T-cell (primary cell): ENCODE measurements at regions of chr10 and their contacts with region 1.

Region 1: GRCh38 chr10:100508691-100509150 is 10.9 kb downstream of the SEC31B start:
- DNase-seq: peak in 25 of 35 experiments; percentile 5 to 84 (median 33)
- ATAC-seq: peak; percentile 53 to 68 (median 61)
- H3K4me3 ChIP-seq: no peak overlapping the region
- H3K4me3 Mint-ChIP-seq: peak overlapping the region; percentile 25 to 70 (median 37)
- H3K27ac ChIP-seq: peak overlapping the region; percentile 66
- H3K27ac Mint-ChIP-seq: peak overlapping the region; percentile 89 to 90
- H3K4me1 ChIP-seq: peaks cover 36 to 50% of the 10 kb centered on the region in 2 experiments
- H3K4me1 Mint-ChIP-seq: peaks cover 66 to 73% (median 71%) of the 10 kb centered on the region in 3 donors
- H3K27me3 ChIP-seq: no peaks in the 10 kb centered on the region
- H3K27me3 Mint-ChIP-seq: no peaks in the 10 kb centered on the region

Region 2: GRCh38 chr10:100338434-100339036 is 170.2 kb before region 1 on chr10:
- CTCF ChIA-PET with region 1: interaction called, 4 to 13 read pairs
- POLR2A ChIA-PET with region 1: interaction called in 1 of 2 experiments, 8 read pairs
- DNase-seq: peak; percentile 53 to 87 (median 73)
- ATAC-seq: peak; percentile 81 to 90 (median 86)
- H3K4me3 ChIP-seq: no peak overlapping the region
- H3K4me3 Mint-ChIP-seq: no peak overlapping the region
- H3K27ac ChIP-seq: no peak overlapping the region
- H3K27ac Mint-ChIP-seq: no peak overlapping the region
- H3K4me1 ChIP-seq: no peaks in the 10 kb centered on the region
- H3K4me1 Mint-ChIP-seq: peaks cover 0 to 4% (median 4%) of the 10 kb centered on the region in 3 donors
- H3K27me3 ChIP-seq: peaks cover 0 to 4% of the 10 kb centered on the region in 2 experiments
- H3K27me3 Mint-ChIP-seq: peaks cover 3 to 7% of the 10 kb centered on the region in 2 donors

Region 3: DNA sequence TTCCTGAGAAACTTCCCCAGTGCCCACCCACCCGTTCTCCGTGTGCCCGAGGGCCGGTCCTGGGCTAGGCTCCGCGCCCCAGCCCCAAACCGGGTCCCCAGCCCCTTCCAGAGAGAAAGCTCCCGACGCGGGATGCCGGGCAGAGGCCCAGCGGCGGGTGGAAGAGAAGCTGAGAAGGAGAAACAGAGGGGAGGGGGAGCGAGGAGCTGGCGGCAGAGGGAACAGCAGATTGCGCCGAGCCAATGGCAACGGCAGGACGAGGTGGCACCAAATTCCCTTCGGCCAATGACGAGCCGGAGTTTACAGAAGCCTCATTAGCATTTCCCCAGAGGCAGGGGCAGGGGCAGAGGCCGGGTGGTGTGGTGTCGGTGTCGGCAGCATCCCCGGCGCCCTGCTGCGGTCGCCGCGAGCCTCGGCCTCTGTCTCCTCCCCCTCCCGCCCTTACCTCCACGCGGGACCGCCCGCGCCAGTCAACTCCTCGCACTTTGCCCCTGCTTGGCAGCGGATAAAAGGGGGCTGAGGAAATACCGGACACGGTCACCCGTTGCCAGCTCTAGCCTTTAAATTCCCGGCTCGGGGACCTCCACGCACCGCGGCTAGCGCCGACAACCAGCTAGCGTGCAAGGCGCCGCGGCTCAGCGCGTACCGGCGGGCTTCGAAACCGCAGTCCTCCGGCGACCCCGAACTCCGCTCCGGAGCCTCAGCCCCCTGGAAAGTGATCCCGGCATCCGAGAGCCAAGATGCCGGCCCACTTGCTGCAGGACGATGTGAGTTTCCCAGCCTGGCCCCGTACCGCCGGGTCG is 161.8 kb before region 1 on chr10 and contains the start of gene SCD:
- CTCF ChIA-PET with region 1: interaction called, 4 to 21 read pairs
- POLR2A ChIA-PET with region 1: interaction called in 1 of 2 experiments, 8 read pairs
- DNase-seq: peak; percentile 43 to 86 (median 62)
- ATAC-seq: peak; percentile 84 to 92 (median 86)
- H3K4me3 ChIP-seq: peak within 1 kb of the TSS; percentile 69 to 77
- H3K4me3 Mint-ChIP-seq: peak within 1 kb of the TSS; percentile 80 to 88 (median 81)
- H3K27ac ChIP-seq: peak within 1 kb of the TSS; percentile 35
- H3K27ac Mint-ChIP-seq: peak within 1 kb of the TSS; percentile 23 to 29
- H3K4me1 ChIP-seq: peaks cover 2 to 31% of the 10 kb centered on the region in 2 experiments
- H3K4me1 Mint-ChIP-seq: peaks cover 17 to 32% (median 21%) of the 10 kb centered on the region in 3 donors
- H3K27me3 ChIP-seq: peaks cover 0 to 9% of the 10 kb centered on the region in 2 experiments
- H3K27me3 Mint-ChIP-seq: peaks cover 0 to 5% of the 10 kb centered on the region in 2 donors
- total RNA-seq, gene SCD: 2.1 to 5.7 (median 4.7) TPM

Region 4: DNA sequence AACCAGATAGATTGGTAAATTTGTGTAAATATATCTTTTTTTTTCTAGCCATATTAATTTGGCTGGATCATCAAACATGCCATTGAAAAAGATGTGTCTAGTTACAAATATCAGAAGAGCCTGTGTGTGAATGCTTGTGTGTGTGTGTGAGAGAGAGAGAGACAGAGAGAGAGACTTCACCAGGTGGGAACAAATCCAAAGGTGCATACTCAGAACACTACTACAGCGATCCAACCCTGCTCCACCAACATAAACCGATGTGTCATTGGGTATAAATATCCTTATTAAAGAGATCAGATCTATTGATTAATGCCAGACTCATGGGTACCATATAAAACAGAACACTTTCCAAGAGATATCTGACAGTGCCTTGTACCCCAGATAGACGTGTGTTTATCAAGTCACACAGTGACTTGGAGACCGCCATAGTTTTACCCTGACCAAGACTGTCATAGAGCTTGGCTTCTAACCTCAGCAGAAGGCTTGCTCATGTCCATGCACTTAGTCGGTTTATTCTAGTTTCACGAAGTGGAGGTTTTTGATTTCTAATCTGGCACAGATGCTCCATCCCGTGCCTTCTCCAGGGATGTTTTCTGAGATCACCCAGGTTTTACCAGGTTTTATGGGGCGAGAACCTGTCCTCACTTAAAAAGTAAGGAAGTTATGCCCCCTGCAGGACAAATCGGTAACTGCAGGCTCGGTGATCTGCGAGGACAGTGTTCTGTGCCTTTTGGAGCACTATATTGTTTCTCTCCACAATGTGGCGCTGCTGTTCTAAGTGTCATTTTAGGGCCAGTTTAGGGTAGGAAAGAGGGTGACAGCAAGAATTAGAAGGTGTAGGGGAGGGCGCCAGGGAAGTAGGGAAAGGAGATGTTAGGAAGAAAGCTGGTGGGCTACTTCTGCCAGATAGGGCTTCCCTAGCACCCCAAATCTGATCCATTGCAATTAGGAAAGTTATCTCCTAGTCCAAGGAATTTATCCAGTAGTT is 75.2 kb before region 1 on chr10:
- CTCF ChIA-PET with region 1: interaction called, 11 to 38 read pairs
- POLR2A ChIA-PET with region 1: interaction called in 1 of 2 experiments, 10 read pairs
- DNase-seq: peak; percentile 75 to 98 (median 92)
- ATAC-seq: peak; percentile 96 to 99 (median 97)
- H3K4me3 ChIP-seq: no peak overlapping the region
- H3K4me3 Mint-ChIP-seq: no peak overlapping the region
- H3K27ac ChIP-seq: no peak overlapping the region
- H3K27ac Mint-ChIP-seq: no peak overlapping the region
- H3K4me1 ChIP-seq: no peaks in the 10 kb centered on the region
- H3K4me1 Mint-ChIP-seq: no peaks in the 10 kb centered on the region
- H3K27me3 ChIP-seq: no peaks in the 10 kb centered on the region
- H3K27me3 Mint-ChIP-seq: peaks cover 0 to 4% of the 10 kb centered on the region in 2 donors

Region 5: GRCh38 chr10:100481462-100482081 is 27.1 kb before region 1 on chr10:
- CTCF ChIA-PET with region 1: interaction called, 6 to 61 read pairs
- POLR2A ChIA-PET with region 1: no interaction called
- DNase-seq: peak; percentile 76 to 100 (median 90)
- ATAC-seq: peak; percentile 91 to 93 (median 92)
- H3K4me3 ChIP-seq: peak overlapping the region; percentile 53 to 80
- H3K4me3 Mint-ChIP-seq: peak overlapping the region; percentile 79 to 86 (median 85)
- H3K27ac ChIP-seq: no peak overlapping the region
- H3K27ac Mint-ChIP-seq: no peak overlapping the region
- H3K4me1 ChIP-seq: peaks cover 4 to 17% of the 10 kb centered on the region in 2 experiments
- H3K4me1 Mint-ChIP-seq: peaks cover 11 to 22% (median 14%) of the 10 kb centered on the region in 3 donors
- H3K27me3 ChIP-seq: peaks cover 2 to 22% of the 10 kb centered on the region in 2 experiments
- H3K27me3 Mint-ChIP-seq: peaks cover 17 to 23% of the 10 kb centered on the region in 2 donors

Region 6: DNA sequence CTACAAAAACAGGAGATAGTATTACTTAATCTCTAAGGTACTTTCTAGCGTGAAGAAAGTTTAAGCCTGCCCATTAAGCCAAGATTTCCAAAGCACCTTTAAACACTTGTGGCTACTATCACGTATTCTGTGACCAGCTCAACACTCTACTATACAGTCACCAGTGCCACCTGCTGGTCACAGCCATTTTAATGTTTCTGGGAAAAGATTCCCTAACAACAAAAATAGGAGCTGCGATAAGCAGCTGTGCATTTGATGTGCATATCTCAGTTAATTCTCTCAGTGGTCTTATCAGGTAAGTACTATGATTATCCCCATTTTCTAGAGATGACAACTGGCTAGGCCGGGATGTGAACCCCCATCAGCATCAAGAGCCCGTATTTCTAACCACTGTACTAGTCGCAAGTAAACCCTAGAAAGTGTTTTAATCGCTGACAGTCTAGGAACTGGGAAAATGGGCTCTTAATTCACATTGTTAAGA is 10.1 kb after region 1 on chr10:
- CTCF ChIA-PET with region 1: interaction called, 15 to 56 read pairs
- POLR2A ChIA-PET with region 1: interaction called, 3 read pairs
- DNase-seq: peak in 27 of 35 experiments; percentile 12 to 77 (median 46)
- ATAC-seq: peak; percentile 65 to 78 (median 72)
- H3K4me3 ChIP-seq: peak overlapping the region in 1 of 2 donors; percentile 46
- H3K4me3 Mint-ChIP-seq: peak overlapping the region in 1 of 3 donors; percentile 17
- H3K27ac ChIP-seq: no peak overlapping the region
- H3K27ac Mint-ChIP-seq: peak overlapping the region in 1 of 2 donors; percentile 28
- H3K4me1 ChIP-seq: peaks cover 7 to 11% of the 10 kb centered on the region in 2 experiments
- H3K4me1 Mint-ChIP-seq: peaks cover 11 to 15% (median 12%) of the 10 kb centered on the region in 3 donors
- H3K27me3 ChIP-seq: no peaks in the 10 kb centered on the region
- H3K27me3 Mint-ChIP-seq: no peaks in the 10 kb centered on the region

Region 7: GRCh38 chr10:100535715-100536353 is 27.1 kb after region 1 on chr10 and contains the start of gene HIF1AN:
- CTCF ChIA-PET with region 1: interaction called, 3 to 15 read pairs
- POLR2A ChIA-PET with region 1: interaction called in 1 of 2 experiments, 4 read pairs
- DNase-seq: peak; percentile 67 to 96 (median 87)
- ATAC-seq: peak; percentile 92 to 100 (median 98)
- H3K4me3 ChIP-seq: peak within 1 kb of the TSS; percentile 81 to 86
- H3K4me3 Mint-ChIP-seq: no peak within 1 kb of the TSS
- H3K27ac ChIP-seq: peak within 1 kb of the TSS; percentile 54
- H3K27ac Mint-ChIP-seq: peak within 1 kb of the TSS; percentile 28 to 48
- H3K4me1 ChIP-seq: peaks cover 17 to 20% of the 10 kb centered on the region in 2 experiments
- H3K4me1 Mint-ChIP-seq: peaks cover 5 to 10% (median 9%) of the 10 kb centered on the region in 3 donors
- H3K27me3 ChIP-seq: no peaks in the 10 kb centered on the region
- H3K27me3 Mint-ChIP-seq: no peaks in the 10 kb centered on the region
- total RNA-seq, gene HIF1AN: 40.9 to 53.4 (median 51.9) TPM